GM12878 (cell line): ENCODE measurements at regions of chr1 and their contacts with region 1.

Region 1: GRCh38 chr1:15323351-15323988 is 76.4 kb downstream of the FHAD1 start:
- DNase-seq: no peak
- ATAC-seq: peak; percentile 98
- H3K4me3 ChIP-seq: no peak overlapping the region
- H3K27ac ChIP-seq: no peak overlapping the region
- H3K4me1 ChIP-seq: no peaks in the 10 kb centered on the region
- H3K27me3 ChIP-seq: no peaks in the 10 kb centered on the region; a peak in 1 of 4 replicates
- CTCF ChIP-seq: peak; percentile 94 to 99 (median 94)
- EP300 ChIP-seq: no peak
- POLR2A ChIP-seq: no peak
- RAD21 ChIP-seq: peak; percentile 87

Region 2: DNA sequence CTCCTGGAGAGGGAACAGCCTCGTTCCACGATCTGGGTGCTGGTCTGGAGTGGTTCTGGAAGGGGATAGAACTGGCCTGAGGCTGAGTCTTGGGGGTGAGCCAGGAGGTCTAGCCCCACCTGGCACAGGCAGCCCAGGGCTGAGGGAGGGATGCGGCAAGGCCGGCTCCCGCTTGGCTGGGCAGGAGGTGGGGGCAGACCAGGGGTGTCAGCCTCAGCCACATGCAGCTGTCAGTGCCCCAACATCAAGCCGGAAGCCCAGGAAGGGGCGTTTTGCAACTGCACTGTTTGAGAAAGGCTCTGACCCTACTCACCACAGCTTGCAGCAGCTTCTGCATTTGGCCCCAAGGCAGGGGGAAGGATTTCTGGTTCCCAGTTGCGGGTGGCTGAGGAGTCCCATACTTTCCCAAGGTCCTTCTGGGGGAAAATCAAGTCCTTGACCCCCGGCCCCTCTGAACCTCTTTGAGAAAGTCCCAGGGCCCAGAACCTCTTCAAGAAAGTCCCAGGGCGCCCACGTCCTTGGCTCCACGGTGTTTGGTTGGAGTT is 88.2 kb after region 1 on chr1:
- CTCF ChIA-PET with region 1: interaction called, 14 read pairs
- POLR2A ChIA-PET with region 1: no interaction called
- RAD21 ChIA-PET with region 1: interaction called, 6 read pairs
- SMC1A ChIA-PET with region 1: interaction called, 19 read pairs
- in situ Hi-C with region 1: no loop called
- intact Hi-C with region 1: loop called (anchors 5 kb)
- DNase-seq: no peak
- ATAC-seq: peak; percentile 69
- H3K4me3 ChIP-seq: peak overlapping the region; percentile 97
- H3K27ac ChIP-seq: peak overlapping the region; percentile 75
- H3K4me1 ChIP-seq: peaks cover 37% of the 10 kb centered on the region
- H3K27me3 ChIP-seq: peaks cover 0 to 3% of the 10 kb centered on the region in 2 experiments; a peak in 1 of 4 replicates
- CTCF ChIP-seq: no peak
- EP300 ChIP-seq: 0 out of 4 replicates have a peak, but pooled peaks of 1 of the 2 experiments have one; percentile 9
- POLR2A ChIP-seq: peak; percentile 43; the same call in 1 of the 2 replicates
- RAD21 ChIP-seq: no peak

Region 3: DNA sequence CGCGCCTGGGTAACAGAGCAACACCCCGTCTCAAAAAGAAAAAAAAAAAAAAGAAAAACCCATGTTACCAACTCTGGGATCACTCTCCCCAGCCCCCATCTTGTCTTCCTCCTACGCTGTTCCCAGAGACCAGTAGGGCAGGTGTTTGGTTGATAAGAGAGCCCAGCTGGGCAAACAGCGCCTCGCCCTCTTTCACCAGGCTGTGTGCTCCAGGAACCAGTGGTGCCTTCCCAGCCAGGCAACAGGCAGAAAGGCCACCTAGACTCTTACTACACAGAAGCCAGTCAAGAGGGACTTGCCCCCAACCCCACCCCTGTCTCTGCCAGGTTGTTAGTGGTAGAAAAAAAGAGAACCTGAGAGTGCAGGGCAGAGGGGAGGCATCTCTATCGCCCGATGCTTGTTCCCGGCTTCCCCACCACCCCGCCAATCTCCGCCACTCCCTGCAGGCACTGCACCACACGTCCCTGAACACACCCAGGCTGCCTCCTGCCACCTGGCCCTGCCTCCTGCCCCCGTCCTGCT is 100.7 kb after region 1 on chr1:
- CTCF ChIA-PET with region 1: interaction called, 178 read pairs
- POLR2A ChIA-PET with region 1: no interaction called
- RAD21 ChIA-PET with region 1: interaction called, 5 read pairs
- SMC1A ChIA-PET with region 1: interaction called, 64 read pairs
- in situ Hi-C with region 1: loop called (anchors 5 kb)
- intact Hi-C with region 1: loop called (anchors 5 kb)
- DNase-seq: no peak
- ATAC-seq: no peak
- H3K4me3 ChIP-seq: no peak overlapping the region
- H3K27ac ChIP-seq: no peak overlapping the region
- H3K4me1 ChIP-seq: no peaks in the 10 kb centered on the region
- H3K27me3 ChIP-seq: no peaks in the 10 kb centered on the region
- CTCF ChIP-seq: no peak
- EP300 ChIP-seq: no peak
- POLR2A ChIP-seq: no peak
- RAD21 ChIP-seq: no peak

Region 4: DNA sequence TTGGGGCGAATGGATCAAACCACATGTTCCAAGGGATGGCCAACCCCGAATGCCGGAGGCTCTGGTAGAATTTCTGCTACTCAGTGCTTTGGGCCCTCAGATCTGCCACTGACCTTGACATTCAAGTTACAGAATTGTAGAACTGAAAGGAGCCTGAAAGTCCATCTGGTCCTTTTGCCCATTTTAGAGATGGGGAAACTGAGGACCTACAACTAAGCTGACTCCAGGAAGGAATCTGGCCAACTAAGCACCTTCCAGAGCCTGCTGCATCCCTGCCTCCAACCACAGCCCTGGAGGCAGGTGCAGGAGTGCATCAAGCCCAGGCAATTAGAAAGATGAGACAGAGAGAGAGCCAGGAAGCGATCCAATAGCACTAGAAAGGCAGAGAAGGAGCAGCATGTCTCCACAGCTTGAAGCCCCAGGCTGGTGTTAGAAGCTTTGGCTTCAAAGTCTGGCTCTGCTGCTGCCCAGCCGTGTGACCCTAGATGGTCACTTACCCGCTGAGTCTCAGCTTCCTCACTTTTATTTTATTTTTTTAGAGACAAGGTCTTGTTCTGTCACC is 113.5 kb after region 1 on chr1:
- CTCF ChIA-PET with region 1: interaction called, 178 read pairs
- POLR2A ChIA-PET with region 1: interaction called, 4 read pairs
- RAD21 ChIA-PET with region 1: interaction called, 22 read pairs
- SMC1A ChIA-PET with region 1: interaction called, 64 read pairs
- in situ Hi-C with region 1: no loop called
- intact Hi-C with region 1: no loop called
- DNase-seq: no peak
- ATAC-seq: no peak
- H3K4me3 ChIP-seq: no peak overlapping the region
- H3K27ac ChIP-seq: no peak overlapping the region
- H3K4me1 ChIP-seq: no peaks in the 10 kb centered on the region
- H3K27me3 ChIP-seq: no peaks in the 10 kb centered on the region
- CTCF ChIP-seq: no peak
- EP300 ChIP-seq: no peak
- POLR2A ChIP-seq: no peak
- RAD21 ChIP-seq: no peak

Region 5: GRCh38 chr1:15640667-15641066 is 317.2 kb after region 1 on chr1:
- CTCF ChIA-PET with region 1: no interaction called
- POLR2A ChIA-PET with region 1: no interaction called
- RAD21 ChIA-PET with region 1: no interaction called
- SMC1A ChIA-PET with region 1: no interaction called
- in situ Hi-C with region 1: no loop called
- intact Hi-C with region 1: no loop called
- DNase-seq: no peak
- ATAC-seq: no peak
- H3K4me3 ChIP-seq: no peak overlapping the region
- H3K27ac ChIP-seq: no peak overlapping the region
- H3K4me1 ChIP-seq: no peaks in the 10 kb centered on the region
- H3K27me3 ChIP-seq: no peaks in the 10 kb centered on the region
- CTCF ChIP-seq: no peak
- EP300 ChIP-seq: no peak
- POLR2A ChIP-seq: no peak
- RAD21 ChIP-seq: no peak